Activated B cell treated with CpG ODN at 0.5 μM for 24 hours (primary cell): ENCODE measurements at regions of chr19 and their contacts with region 1.

Region 1: DNA sequence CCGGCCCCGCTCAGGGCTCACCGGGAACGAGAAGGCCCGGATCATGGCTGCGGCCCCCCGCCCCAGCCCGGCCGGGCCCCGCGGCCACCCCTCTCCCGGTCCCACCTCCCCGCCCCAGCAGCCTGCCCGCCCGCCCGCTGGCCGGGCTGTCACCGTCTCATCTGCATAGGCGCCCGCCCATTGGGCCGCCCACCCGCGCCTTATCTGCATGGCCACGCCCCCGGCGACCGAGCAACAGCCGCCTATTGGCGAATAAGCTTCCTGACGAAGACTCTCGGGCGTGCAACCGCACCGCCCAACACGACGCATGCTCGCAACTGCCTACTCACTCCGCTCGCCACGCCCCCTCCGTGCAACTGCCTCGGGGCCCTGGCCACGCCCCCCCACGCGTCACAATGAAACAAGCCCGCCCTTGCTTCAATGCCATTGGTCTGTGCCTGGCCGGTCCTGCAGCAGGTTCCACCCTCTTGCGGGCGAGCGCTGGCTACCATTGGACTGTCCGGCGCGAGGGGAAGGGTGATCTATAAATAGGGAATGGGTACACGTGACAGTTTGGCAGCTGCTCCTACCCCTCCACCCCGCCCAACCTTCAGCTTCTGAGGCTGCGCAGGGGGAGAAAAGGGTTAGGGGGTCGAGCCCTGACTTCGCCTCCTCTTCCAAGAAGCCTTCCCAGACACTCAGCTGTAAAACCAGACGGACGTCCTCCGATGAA is at the start of gene DACT3:
- DNase-seq: peak; percentile 100
- ATAC-seq: peak; percentile 91
- H3K4me3 Mint-ChIP-seq: peak within 1 kb of the TSS; percentile 83
- H3K27ac Mint-ChIP-seq: peak within 1 kb of the TSS; percentile 78
- H3K4me1 Mint-ChIP-seq: peaks cover 23% of the 10 kb centered on the region
- H3K27me3 Mint-ChIP-seq: peaks cover 17% of the 10 kb centered on the region
- CTCF ChIP-seq: no peak
- total RNA-seq, gene DACT3: 0.49 and 0.75 TPM in 2 replicates

Region 2: DNA sequence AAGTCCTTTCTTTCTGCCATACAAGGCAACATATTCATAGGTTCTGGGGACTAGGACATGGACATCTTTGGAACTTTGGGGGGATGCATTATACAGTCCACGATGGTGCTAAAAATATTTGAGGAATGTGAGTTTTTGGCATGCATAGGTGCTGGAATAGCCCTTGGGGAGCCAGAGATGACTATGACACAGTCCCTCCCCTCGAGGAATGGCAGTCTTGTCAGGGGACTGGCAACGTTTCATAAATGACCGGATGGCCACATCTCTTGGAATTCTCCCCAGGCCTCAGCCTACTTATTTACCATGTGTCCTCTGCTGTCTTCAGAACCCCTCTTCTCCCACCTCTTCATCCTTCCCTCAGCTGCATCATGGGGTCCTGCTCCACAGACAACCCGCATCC is 914.3 kb before region 1 on chr19:
- CTCF ChIA-PET with region 1: no interaction called
- POLR2A ChIA-PET with region 1: no interaction called
- intact Hi-C with region 1: no loop called
- DNase-seq: no peak
- ATAC-seq: no peak
- H3K4me3 Mint-ChIP-seq: no peak overlapping the region
- H3K27ac Mint-ChIP-seq: no peak overlapping the region
- H3K4me1 Mint-ChIP-seq: no peaks in the 10 kb centered on the region
- H3K27me3 Mint-ChIP-seq: peaks cover 21% of the 10 kb centered on the region
- CTCF ChIP-seq: no peak

Region 3: GRCh38 chr19:45994989-45995714 is 666.0 kb before region 1 on chr19 and contains the start of gene CCDC61:
- CTCF ChIA-PET with region 1: no interaction called
- POLR2A ChIA-PET with region 1: no interaction called
- intact Hi-C with region 1: loop called (anchors 2 kb)
- DNase-seq: peak; percentile 85
- ATAC-seq: peak; percentile 94
- H3K4me3 Mint-ChIP-seq: no peak within 1 kb of the TSS
- H3K27ac Mint-ChIP-seq: no peak within 1 kb of the TSS
- H3K4me1 Mint-ChIP-seq: peaks cover 23% of the 10 kb centered on the region
- H3K27me3 Mint-ChIP-seq: peaks cover 21% of the 10 kb centered on the region
- CTCF ChIP-seq: no peak
- total RNA-seq, gene CCDC61: 24.9 and 26.9 TPM in 2 replicates

Region 4: DNA sequence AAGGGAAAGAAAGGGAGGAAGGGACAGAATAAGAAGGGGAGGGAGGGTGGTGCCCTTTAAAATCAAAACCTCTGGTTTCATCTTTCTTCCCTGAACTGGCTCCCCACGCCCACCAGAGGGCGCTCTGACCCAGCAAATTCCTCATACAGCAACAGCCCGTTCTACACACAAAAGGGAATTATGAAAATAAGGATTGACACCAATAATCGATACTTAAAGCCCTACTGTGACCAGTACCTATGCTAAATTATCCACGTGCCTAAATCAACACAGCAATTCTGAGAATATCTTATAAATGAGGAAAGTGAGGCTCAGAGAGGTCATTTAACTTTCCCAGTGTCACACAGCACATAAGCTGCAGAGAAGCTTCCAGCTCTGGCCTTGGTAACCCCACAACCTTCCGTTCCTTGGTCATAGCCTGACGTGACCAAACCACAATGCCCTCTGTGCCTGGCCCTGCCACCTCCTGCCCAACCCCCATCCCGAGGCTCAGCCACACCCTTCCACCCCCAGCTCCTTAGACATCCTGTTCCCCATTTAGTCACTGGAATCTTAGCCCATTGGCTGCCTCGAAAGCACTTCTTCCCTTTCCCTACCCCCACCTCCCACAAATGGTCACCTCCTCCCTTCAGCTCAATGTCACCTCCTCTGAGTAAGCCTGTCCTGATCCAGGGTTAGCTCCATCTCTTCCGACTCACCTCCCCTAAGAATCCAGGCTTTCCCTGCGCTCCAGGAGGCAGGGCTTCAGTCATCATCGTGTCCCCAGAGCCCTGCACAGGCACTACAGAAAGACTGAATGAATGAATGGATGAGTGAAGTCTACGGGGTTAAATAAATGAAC is 131.3 kb before region 1 on chr19:
- CTCF ChIA-PET with region 1: interaction called, 52 read pairs
- POLR2A ChIA-PET with region 1: interaction called, 5 read pairs
- intact Hi-C with region 1: loop called (anchors 1 kb)
- DNase-seq: peak; percentile 63
- ATAC-seq: peak; percentile 72
- H3K4me3 Mint-ChIP-seq: no peak overlapping the region
- H3K27ac Mint-ChIP-seq: no peak overlapping the region
- H3K4me1 Mint-ChIP-seq: peaks cover 10% of the 10 kb centered on the region
- H3K27me3 Mint-ChIP-seq: peaks cover 9% of the 10 kb centered on the region
- CTCF ChIP-seq: peak; percentile 84

Region 5: DNA sequence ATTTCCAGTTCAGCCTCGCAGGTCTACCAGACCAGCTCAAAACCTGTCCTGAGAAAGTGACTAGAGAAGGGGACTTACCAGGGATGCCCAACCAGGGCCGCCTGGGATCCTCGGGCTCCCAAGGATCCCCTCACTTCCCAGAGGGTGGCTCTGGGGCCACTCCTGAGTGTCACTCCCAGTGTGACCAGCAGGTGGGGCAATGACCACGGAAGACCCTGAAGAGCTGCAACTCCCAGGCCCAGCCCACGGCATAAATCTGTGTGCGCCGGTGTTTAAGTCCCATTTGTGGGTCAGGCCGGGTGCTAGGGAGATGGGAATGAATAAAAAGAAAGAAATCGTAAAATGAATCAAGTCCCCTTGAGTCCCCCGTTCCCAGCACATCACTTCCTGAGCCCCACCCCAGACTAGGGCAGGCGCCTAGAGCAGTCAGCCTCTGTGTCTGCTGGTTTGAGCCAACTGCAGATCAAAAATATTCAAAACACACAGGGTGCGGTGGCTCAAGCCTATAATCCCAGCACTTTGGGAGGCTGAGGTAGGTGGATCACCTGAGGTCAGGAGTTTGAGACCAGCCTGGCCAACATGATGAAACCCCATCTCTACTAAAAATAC is 47.0 kb before region 1 on chr19:
- CTCF ChIA-PET with region 1: interaction called, 234 read pairs
- POLR2A ChIA-PET with region 1: interaction called, 75 read pairs
- intact Hi-C with region 1: loop called (anchors 1 kb)
- DNase-seq: peak; percentile 82
- ATAC-seq: peak; percentile 71
- H3K4me3 Mint-ChIP-seq: no peak overlapping the region
- H3K27ac Mint-ChIP-seq: peak overlapping the region; percentile 63
- H3K4me1 Mint-ChIP-seq: peaks cover 66% of the 10 kb centered on the region
- H3K27me3 Mint-ChIP-seq: no peaks in the 10 kb centered on the region
- CTCF ChIP-seq: peak; percentile 42

Region 6: DNA sequence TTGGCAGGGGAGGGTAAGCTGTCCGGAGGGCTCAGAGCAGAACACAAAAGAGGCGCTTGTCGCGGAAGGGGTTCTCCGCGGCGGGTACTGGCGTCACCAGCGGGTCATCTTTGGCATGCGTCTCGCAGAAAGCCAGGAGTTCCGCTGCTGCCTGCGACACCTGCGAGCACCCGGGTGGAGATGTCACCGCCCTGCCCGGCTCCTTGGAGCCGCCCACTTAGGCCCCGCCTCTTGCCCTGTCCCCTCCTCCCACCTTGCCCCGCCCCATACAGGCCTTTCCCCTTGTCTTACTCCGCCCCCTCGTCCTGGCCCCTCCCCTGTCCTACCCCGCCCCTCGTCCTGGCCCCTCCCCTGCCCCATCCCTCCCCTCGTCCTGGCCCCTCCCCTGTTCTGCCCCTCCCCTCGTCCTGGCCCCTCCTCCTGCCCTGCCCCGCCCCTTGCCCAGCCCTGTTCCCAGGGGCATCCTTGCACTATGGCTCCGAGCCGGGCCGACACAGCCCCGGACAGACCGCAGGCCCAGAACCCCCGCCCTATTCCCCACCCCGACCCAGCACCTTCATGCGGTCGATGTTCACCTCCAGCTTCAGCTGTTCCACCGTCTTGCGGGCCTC is 27.0 kb before region 1 on chr19:
- CTCF ChIA-PET with region 1: interaction called, 16 read pairs
- POLR2A ChIA-PET with region 1: interaction called, 11 read pairs
- intact Hi-C with region 1: loop called (anchors 1 kb)
- DNase-seq: peak; percentile 92
- ATAC-seq: peak; percentile 80
- H3K4me3 Mint-ChIP-seq: peak overlapping the region; percentile 81
- H3K27ac Mint-ChIP-seq: peak overlapping the region; percentile 64
- H3K4me1 Mint-ChIP-seq: peaks cover 30% of the 10 kb centered on the region
- H3K27me3 Mint-ChIP-seq: no peaks in the 10 kb centered on the region
- CTCF ChIP-seq: no peak